PC-9 (cell line): ENCODE measurements at regions of chr1 and their contacts with region 1.

Region 1: GRCh38 chr1:1511533-1512285 is at the start of gene ATAD3A:
- DNase-seq: peak; percentile 89 to 96
- H3K4me3 ChIP-seq: peak within 1 kb of the TSS; percentile 85
- H3K27ac ChIP-seq: peak within 1 kb of the TSS; percentile 76
- H3K4me1 ChIP-seq: peaks cover 6% of the 10 kb centered on the region
- H3K27me3 ChIP-seq: no peaks in the 10 kb centered on the region
- CTCF ChIP-seq: no peak
- total RNA-seq, gene ATAD3A: 36.6 and 43.6 TPM in 2 replicates

Region 2: DNA sequence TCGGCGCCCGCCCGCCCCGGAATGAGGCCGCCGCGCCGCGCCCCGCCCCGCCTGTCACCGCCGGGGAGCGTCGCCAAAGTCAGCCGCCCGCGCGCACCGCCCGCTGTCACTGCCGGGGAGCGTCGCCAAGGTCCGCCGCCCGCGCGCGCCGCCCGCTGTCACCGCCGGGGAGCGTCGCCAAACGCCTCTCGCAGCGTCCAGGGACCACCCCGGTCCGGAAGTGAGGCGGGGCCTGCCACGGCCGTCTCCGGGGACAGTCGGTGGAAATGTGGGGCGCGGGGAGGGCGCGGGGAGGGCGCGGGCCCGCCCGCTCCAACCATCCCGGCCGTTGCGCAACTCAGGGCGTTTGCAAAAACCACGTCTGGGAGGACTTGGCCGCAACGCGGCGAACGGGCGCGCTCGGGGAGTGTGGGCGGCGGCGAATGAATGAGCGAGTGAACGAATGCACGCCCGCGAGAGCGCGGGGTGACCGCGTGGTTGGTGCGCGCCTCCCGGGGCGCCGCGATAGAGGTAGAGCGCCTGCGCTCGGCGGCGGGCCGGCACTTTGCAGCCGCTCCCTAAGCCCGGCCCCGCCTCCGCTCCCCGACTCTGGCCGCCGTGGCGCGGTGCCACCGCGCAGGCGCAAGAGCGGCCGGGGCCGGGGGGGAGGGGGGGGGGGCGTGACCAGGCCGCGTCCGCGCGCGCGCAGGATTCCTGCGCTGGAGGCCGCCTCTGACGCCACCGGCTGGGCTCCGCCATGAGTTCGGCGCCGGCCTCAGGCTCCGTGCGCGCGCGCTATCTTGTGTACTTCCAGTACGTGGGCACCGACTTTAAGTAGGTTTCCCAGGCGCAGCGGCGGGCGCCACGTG is 203.6 kb before region 1 on chr1 and contains the starts of genes ACAP3 and PUSL1:
- CTCF ChIA-PET with region 1: no interaction called
- POLR2A ChIA-PET with region 1: no interaction called
- intact Hi-C with region 1: loop called (anchors 10 kb)
- DNase-seq: peak; percentile 72 to 89
- H3K4me3 ChIP-seq: peak within 1 kb of the TSS; percentile 84
- H3K27ac ChIP-seq: peak within 1 kb of the TSS; percentile 41
- H3K4me1 ChIP-seq: peaks cover 36% of the 10 kb centered on the region
- H3K27me3 ChIP-seq: no peaks in the 10 kb centered on the region
- CTCF ChIP-seq: no peak
- total RNA-seq, gene ACAP3: 53.5 and 54.8 TPM in 2 replicates
- total RNA-seq, gene PUSL1: 18.0 and 18.9 TPM in 2 replicates

Region 3: DNA sequence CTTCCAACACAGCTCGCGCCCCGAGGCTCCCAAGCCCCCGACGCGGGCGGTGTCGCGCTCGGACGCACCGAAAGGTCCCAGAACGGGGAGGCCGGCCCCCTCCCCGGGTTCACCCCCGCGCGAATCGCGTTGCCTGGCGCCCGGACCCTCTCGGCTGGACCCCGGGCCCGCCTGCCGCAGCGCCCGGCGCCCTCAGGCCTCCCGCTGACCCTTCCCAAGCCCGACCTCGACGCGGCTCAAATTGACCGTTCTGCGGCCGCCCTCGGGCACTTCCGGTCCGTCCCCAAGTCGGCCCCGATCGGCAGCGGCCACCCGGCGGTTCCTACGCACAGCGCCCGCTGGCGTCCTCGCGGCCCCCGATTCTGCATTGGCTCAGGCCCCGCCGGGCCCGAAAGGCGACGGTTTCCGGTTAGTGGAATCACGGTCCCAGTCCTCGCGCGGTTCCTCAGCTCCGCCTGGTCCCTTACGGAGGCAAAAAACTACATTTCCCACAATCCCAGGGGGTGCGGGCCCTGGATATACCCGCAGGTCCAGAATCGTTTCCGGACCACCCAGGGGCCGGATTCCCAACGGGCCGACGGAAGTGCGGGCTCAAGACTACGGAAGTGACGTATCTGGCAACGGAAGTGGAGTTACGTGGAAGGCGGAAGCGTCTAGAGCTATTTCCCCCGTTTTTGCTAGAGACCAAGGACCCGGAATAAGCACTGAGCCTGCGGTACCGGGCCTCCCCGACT is 136.6 kb before region 1 on chr1 and contains the start of gene AURKAIP1:
- CTCF ChIA-PET with region 1: no interaction called
- POLR2A ChIA-PET with region 1: no interaction called
- intact Hi-C with region 1: loop called (anchors 10 kb)
- DNase-seq: peak; percentile 97 to 99
- H3K4me3 ChIP-seq: peak within 1 kb of the TSS; percentile 81
- H3K27ac ChIP-seq: peak within 1 kb of the TSS; percentile 75
- H3K4me1 ChIP-seq: peaks cover 16% of the 10 kb centered on the region
- H3K27me3 ChIP-seq: no peaks in the 10 kb centered on the region
- CTCF ChIP-seq: no peak
- total RNA-seq, gene AURKAIP1: 164 and 210 TPM in 2 replicates

Region 4: DNA sequence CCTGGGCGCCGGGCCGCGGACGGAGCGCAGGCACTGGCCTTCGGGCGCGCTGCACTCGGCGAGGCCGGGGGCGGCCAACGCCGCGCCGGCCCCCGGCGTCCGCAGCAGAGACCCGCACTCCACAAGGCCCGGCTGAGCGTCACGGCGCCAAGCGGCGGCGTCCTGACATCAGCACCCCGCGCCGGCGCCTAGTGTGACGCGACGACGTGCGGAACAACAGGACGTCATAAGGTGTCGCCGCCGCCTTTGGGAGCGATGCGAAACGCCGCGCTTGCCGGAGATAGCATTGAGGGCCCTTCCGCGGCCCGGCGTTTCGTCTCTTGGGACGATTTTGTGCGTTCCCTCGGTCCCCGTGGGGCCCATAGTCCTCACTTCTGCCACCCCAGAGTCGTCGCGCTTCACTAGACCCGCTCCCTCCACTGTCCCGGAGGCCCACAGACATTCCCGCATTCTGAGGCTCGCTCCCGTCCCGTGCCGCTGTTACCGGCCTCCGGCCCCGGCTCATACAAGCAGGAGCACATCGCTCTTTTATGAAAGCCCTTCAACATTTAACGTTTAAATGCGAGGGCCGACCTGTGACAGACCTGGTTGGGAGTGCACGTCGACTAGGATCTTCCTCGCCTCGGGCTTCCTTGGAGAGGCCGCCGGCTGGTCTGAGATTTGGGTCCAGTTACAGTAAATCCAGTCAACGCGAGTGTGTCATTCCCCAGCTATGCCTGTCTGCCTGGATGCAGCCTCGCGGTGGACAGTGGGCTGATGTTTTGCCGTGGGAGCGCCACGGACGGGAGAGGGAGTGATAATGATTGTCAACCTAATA is 63.2 kb after region 1 on chr1 and contains the start of gene SSU72:
- CTCF ChIA-PET with region 1: no interaction called
- POLR2A ChIA-PET with region 1: no interaction called
- intact Hi-C with region 1: no loop called
- DNase-seq: peak; percentile 76 to 83
- H3K4me3 ChIP-seq: peak within 1 kb of the TSS; percentile 96
- H3K27ac ChIP-seq: peak within 1 kb of the TSS; percentile 81
- H3K4me1 ChIP-seq: peaks cover 14% of the 10 kb centered on the region
- H3K27me3 ChIP-seq: peaks cover 18% of the 10 kb centered on the region
- CTCF ChIP-seq: no peak
- total RNA-seq, gene SSU72: 139 and 145 TPM in 2 replicates

Region 5: DNA sequence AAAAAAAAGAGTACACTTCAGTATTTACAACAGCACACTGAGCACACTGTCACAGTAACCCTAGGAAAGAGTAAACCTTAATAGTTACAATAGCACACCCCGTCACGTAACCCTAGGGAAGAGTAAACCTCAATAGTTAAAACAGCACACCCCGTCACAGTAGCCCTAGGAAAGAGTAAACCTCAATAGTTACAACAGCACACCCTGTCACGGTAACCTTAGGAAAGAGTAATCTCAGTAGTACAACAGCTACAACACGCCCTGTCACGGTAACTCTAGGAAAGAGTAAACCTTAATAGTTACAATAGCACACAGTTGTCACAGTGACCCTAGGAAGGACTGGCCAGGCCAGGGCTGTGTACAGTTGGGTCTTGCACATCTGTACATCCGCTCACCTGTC is 209.5 kb after region 1 on chr1:
- CTCF ChIA-PET with region 1: no interaction called
- POLR2A ChIA-PET with region 1: no interaction called
- intact Hi-C with region 1: no loop called
- DNase-seq: no peak
- H3K4me3 ChIP-seq: no peak overlapping the region
- H3K27ac ChIP-seq: no peak overlapping the region
- H3K4me1 ChIP-seq: no peaks in the 10 kb centered on the region
- H3K27me3 ChIP-seq: no peaks in the 10 kb centered on the region
- CTCF ChIP-seq: no peak